PC-9 (cell line): ENCODE measurements at regions of chr7 and their contacts with region 1.

Region 1: GRCh38 chr7:130896898-130897514 is 163.0 kb upstream of the KLF14 start:
- DNase-seq: peak; percentile 50 to 66
- H3K4me3 ChIP-seq: no peak overlapping the region
- H3K27ac ChIP-seq: peak overlapping the region; percentile 99
- H3K4me1 ChIP-seq: peaks cover 97% of the 10 kb centered on the region
- H3K27me3 ChIP-seq: no peaks in the 10 kb centered on the region
- CTCF ChIP-seq: peak; percentile 60

Region 2: DNA sequence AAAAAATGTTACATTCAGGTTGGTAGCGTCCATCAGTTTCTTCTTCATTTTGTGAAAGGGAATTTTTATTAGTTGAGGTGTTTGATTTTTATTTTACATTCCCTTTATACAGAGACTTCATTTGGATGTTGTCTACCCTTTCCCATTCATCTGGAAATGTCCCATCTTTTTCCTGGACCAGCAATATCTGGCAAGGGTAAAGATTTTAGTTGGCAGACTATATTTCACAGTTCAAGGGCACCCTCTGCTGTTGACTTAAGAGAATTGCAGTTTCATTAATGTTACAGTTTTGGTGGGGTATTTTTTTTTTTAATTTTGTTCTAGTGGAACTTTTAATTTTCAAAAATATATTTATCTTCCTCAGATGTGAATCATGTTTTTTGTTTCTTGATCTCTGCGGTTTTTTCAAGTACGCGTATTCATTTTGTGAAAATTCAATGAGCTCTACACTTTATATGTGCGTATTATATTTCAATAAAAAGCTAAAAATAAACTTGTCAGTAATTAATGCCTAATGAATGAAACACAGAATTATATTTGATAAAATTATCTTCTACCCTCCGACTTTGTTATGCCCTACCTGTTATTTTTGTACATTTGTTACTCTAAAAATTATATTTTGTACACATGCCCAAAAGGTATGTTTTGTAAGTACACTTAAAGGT is 65.1 kb before region 1 on chr7:
- CTCF ChIA-PET with region 1: no interaction called
- POLR2A ChIA-PET with region 1: no interaction called
- intact Hi-C with region 1: no loop called
- DNase-seq: peak in 1 of 2 experiments; percentile 58
- H3K4me3 ChIP-seq: no peak overlapping the region
- H3K27ac ChIP-seq: no peak overlapping the region
- H3K4me1 ChIP-seq: no peaks in the 10 kb centered on the region
- H3K27me3 ChIP-seq: no peaks in the 10 kb centered on the region
- CTCF ChIP-seq: peak; percentile 95

Region 3: DNA sequence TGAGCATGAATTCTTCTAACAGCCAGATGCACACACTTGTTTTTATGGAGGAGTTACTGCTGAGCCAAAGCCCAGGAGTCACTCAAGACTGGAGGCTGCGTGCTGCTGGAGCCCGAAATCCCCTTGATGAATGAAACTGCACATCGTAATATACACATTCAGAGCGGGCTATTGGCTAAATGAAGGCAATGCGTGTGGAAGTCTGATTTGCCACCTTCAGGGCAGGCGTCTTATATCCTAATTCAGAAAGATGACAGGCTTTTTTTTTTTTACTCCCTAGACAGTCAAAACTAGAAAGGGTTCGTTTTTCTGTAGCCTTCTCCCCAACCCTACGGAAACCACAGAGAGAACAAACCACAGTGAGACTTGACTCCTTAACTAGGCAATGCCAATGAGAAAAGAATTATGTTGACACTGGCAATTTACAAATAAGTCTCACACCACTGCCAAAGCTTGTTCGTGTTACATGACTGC is 64.2 kb after region 1 on chr7:
- CTCF ChIA-PET with region 1: interaction called, 17 read pairs
- POLR2A ChIA-PET with region 1: no interaction called
- intact Hi-C with region 1: no loop called
- DNase-seq: peak in 1 of 2 experiments; percentile 47
- H3K4me3 ChIP-seq: peak overlapping the region; percentile 30; the same call in 1 of the 2 replicates
- H3K27ac ChIP-seq: peak overlapping the region; percentile 97
- H3K4me1 ChIP-seq: peaks cover 38% of the 10 kb centered on the region
- H3K27me3 ChIP-seq: no peaks in the 10 kb centered on the region
- CTCF ChIP-seq: no peak

Region 4: GRCh38 chr7:131007394-131008330 is 110.7 kb after region 1 on chr7:
- CTCF ChIA-PET with region 1: interaction called, 9 read pairs
- POLR2A ChIA-PET with region 1: no interaction called
- intact Hi-C with region 1: loop called (anchors 1 kb)
- DNase-seq: peak; percentile 70 to 97
- H3K4me3 ChIP-seq: no peak overlapping the region
- H3K27ac ChIP-seq: peak overlapping the region; percentile 64
- H3K4me1 ChIP-seq: peaks cover 67% of the 10 kb centered on the region
- H3K27me3 ChIP-seq: no peaks in the 10 kb centered on the region
- CTCF ChIP-seq: peak; percentile 71; the same call in 1 of the 2 replicates

Region 5: DNA sequence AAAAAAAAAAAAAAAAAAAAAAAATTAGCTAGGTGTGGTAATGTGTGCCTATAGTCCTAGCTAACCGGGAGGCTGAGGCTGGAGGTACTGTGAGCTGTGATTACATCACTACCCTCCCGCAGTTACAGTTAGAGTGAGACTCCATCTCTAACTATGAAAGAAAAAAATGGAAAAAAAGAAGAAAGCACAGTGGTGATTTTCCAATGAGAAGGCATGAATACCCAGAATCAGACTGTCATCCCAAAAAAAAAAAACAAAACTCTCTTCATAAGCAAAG is 160.7 kb after region 1 on chr7:
- CTCF ChIA-PET with region 1: no interaction called
- POLR2A ChIA-PET with region 1: no interaction called
- intact Hi-C with region 1: no loop called
- DNase-seq: no peak
- H3K4me3 ChIP-seq: no peak overlapping the region
- H3K27ac ChIP-seq: peak overlapping the region; percentile 19; the same call in 1 of the 2 replicates
- H3K4me1 ChIP-seq: no peaks in the 10 kb centered on the region
- H3K27me3 ChIP-seq: no peaks in the 10 kb centered on the region
- CTCF ChIP-seq: no peak

Region 6: GRCh38 chr7:131424219-131424822 is 527.3 kb after region 1 on chr7:
- CTCF ChIA-PET with region 1: no interaction called
- POLR2A ChIA-PET with region 1: no interaction called
- intact Hi-C with region 1: loop called (anchors 10 kb)
- DNase-seq: peak in 1 of 2 experiments; percentile 43
- H3K4me3 ChIP-seq: no peak overlapping the region
- H3K27ac ChIP-seq: peak overlapping the region; percentile 36; the same call in 1 of the 2 replicates
- H3K4me1 ChIP-seq: no peaks in the 10 kb centered on the region
- H3K27me3 ChIP-seq: no peaks in the 10 kb centered on the region
- CTCF ChIP-seq: peak; percentile 69

Region 7: GRCh38 chr7:131654668-131655326 is 757.8 kb after region 1 on chr7:
- CTCF ChIA-PET with region 1: interaction called, 8 read pairs
- POLR2A ChIA-PET with region 1: no interaction called
- intact Hi-C with region 1: loop called (anchors 10 kb)
- DNase-seq: peak; percentile 72 to 90
- H3K4me3 ChIP-seq: no peak overlapping the region
- H3K27ac ChIP-seq: 0 out of 2 replicates have a peak overlapping the region, but pooled peaks have one; percentile 54
- H3K4me1 ChIP-seq: peaks cover 17% of the 10 kb centered on the region
- H3K27me3 ChIP-seq: no peaks in the 10 kb centered on the region
- CTCF ChIP-seq: peak; percentile 97